ENCODE measurements at regions of chr17 and their contacts with region 1.

Region 1: GRCh38 chr17:34420254-34420766 is 57.3 kb upstream of the CCL1 start:
- DNase-seq: peak; percentile 77
- H3K4me3 Mint-ChIP-seq: no peak overlapping the region
- H3K27ac Mint-ChIP-seq: no peak overlapping the region
- H3K4me1 Mint-ChIP-seq: no peaks in the 10 kb centered on the region
- H3K27me3 Mint-ChIP-seq: peaks cover 32% of the 10 kb centered on the region

Region 2: DNA sequence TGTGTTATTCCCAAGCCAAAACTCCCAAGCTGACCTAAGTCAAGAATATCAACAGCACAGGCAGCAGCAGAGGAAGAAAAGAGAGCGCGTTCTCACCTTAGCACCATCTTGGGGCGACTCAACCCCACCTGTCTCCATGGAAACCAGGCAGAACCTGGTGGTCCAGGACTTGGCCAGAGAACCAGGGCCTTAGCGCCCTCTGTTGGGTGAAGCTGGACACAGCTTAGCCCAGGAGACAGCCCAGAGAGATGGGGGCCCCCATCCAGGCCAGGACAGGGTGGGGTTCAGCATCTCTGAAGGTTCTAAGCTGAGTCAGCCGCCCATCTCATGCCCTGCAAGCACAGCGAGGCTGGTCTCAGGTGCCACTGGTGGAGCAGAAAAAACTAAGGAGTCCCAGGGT is 99.0 kb after region 1 on chr17:
- CTCF ChIA-PET with region 1: no interaction called
- intact Hi-C with region 1: loop called (anchors 2 kb)
- DNase-seq: peak; percentile 15
- H3K4me3 Mint-ChIP-seq: no peak overlapping the region
- H3K27ac Mint-ChIP-seq: no peak overlapping the region
- H3K4me1 Mint-ChIP-seq: no peaks in the 10 kb centered on the region
- H3K27me3 Mint-ChIP-seq: peaks cover 5% of the 10 kb centered on the region